Naive thymus-derived CD4-positive, alpha-beta T cell (primary cell): ENCODE measurements at regions of chr18 and their contacts with region 1.

Region 1: DNA sequence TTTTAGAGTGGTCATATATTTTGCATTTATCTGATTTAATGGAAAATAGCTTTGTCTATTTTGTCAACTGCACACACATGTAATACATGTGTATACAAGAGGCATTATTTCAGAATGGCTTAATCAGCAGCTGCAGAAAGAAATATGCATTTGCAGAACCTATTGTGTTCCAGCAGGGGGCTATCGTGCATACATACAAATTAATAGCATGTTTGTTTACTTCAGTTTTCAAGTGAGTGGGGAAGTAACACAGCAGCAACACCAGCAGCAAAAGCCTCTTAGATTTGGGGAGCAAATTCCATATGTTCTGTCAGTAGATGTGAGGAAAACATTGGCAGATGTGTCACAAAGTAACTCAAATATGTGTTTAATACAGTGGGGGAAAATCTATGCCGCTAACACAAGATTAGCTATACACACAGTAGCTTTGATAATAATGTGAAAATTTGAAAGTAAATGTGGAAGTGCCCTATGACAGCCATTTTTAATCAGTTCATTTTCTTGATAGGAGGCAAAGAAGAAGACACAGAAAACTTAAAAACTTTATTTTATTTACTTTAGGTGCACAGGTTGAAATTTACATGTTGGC is 218.1 kb downstream of the WDR7 start:
- DNase-seq: peak in 5 of 9 donors; percentile 10 to 27 (median 19)
- ATAC-seq: peak; percentile 75
- H3K4me3 ChIP-seq: no peak overlapping the region
- H3K4me3 Mint-ChIP-seq: no peak overlapping the region
- H3K27ac ChIP-seq: no peak overlapping the region
- H3K27ac Mint-ChIP-seq: no peak overlapping the region
- H3K4me1 ChIP-seq: peaks cover 0 to 14% of the 10 kb centered on the region in 2 donors
- H3K4me1 Mint-ChIP-seq: peaks cover 7 to 28% (median 19%) of the 10 kb centered on the region in 7 donors
- H3K27me3 ChIP-seq: no peaks in the 10 kb centered on the region
- H3K27me3 Mint-ChIP-seq: no peaks in the 10 kb centered on the region

Region 2: GRCh38 chr18:56711708-56712445 is 157.4 kb before region 1 on chr18:
- CTCF ChIA-PET with region 1: no interaction called
- POLR2A ChIA-PET with region 1: no interaction called
- intact Hi-C with region 1: no loop called
- DNase-seq: no peak
- ATAC-seq: no peak
- H3K4me3 ChIP-seq: no peak overlapping the region
- H3K4me3 Mint-ChIP-seq: no peak overlapping the region
- H3K27ac ChIP-seq: no peak overlapping the region
- H3K27ac Mint-ChIP-seq: no peak overlapping the region
- H3K4me1 ChIP-seq: no peaks in the 10 kb centered on the region
- H3K4me1 Mint-ChIP-seq: peaks cover 0 to 23% (median 7%) of the 10 kb centered on the region in 7 donors
- H3K27me3 ChIP-seq: no peaks in the 10 kb centered on the region
- H3K27me3 Mint-ChIP-seq: no peaks in the 10 kb centered on the region

Region 3: GRCh38 chr18:56770097-56770496 is 99.2 kb before region 1 on chr18:
- CTCF ChIA-PET with region 1: no interaction called
- POLR2A ChIA-PET with region 1: no interaction called
- intact Hi-C with region 1: no loop called
- DNase-seq: no peak
- ATAC-seq: no peak
- H3K4me3 ChIP-seq: no peak overlapping the region
- H3K4me3 Mint-ChIP-seq: no peak overlapping the region
- H3K27ac ChIP-seq: no peak overlapping the region
- H3K27ac Mint-ChIP-seq: no peak overlapping the region
- H3K4me1 ChIP-seq: no peaks in the 10 kb centered on the region
- H3K4me1 Mint-ChIP-seq: peaks cover 0 to 6% (median 0%) of the 10 kb centered on the region in 7 donors
- H3K27me3 ChIP-seq: no peaks in the 10 kb centered on the region
- H3K27me3 Mint-ChIP-seq: no peaks in the 10 kb centered on the region

Region 4: DNA sequence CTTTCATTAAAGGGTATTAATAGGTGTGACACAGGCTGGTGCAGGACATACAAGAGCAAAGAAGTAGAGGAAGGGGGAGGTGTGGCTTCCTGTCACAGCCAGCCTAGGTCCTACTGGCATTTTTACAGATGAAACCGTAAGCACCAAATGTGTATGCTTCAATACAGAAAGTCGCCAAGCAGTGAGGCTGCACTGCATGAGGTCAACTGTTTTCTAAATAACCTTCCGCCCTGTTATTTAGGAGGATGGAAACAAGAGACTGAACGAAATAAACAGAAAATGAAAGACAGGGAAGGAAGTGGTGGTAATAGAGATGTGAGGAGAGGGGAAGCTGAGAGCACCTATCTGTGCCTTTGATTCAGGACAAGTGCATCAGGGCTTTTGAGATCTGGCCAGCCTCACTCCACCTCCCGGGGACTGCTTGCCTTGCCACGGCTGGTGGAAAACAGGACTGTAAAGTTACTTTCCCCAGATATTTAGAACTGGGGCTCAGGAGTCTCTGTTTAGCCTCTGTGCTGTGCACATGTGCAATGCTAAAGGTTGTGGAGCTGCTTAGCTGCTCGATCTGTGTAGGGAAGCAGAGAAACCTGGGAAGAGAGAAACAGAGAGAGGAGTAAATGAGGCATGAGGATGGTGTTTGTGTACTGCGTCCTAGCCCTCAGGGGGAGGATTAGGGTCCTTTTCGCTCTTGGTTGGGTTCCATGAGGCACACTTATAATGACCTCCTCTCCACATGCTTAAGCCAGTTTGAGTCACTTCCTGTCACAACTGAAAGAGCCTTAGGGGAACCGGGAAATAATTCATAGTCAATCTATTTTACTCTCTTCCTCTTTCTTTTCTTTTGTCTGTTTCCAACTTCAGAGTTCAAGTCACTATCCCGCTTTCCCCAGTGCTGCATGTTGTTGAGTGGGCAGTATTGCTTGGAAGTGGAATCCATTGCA is 215.3 kb after region 1 on chr18:
- CTCF ChIA-PET with region 1: no interaction called
- POLR2A ChIA-PET with region 1: no interaction called
- intact Hi-C with region 1: loop called in 1 of 2 experiments (anchors 5 kb)
- DNase-seq: no peak
- ATAC-seq: peak; percentile 54
- H3K4me3 ChIP-seq: peak overlapping the region; percentile 39
- H3K4me3 Mint-ChIP-seq: peak overlapping the region in 5 of 10 donors; percentile 4 to 65 (median 15)
- H3K27ac ChIP-seq: no peak overlapping the region
- H3K27ac Mint-ChIP-seq: peak overlapping the region in 3 of 9 donors; percentile 5 to 69 (median 32)
- H3K4me1 ChIP-seq: peaks cover 0 to 7% of the 10 kb centered on the region in 2 donors
- H3K4me1 Mint-ChIP-seq: peaks cover 4 to 16% (median 11%) of the 10 kb centered on the region in 7 donors
- H3K27me3 ChIP-seq: no peaks in the 10 kb centered on the region
- H3K27me3 Mint-ChIP-seq: peaks cover 9 to 50% (median 34%) of the 10 kb centered on the region in 5 donors

Region 5: DNA sequence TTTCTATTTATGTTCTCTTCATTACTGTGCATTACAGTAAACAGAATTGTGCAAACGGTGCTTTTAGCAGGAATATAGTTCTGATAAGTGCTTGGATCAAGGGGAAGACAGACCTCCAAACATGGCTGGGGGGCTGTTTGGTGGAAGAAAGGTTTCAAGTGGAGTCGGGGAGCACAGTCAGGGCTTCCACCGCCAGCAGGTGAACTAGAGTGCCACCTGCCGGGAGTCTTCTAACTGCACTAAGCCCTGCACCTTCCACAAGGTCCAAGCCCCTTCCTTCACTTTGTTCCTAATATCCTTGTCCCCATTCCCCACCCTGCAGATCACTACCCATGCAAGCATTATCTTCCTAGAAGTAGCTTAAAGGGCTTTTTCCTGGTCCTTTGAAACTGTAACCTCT is 577.0 kb after region 1 on chr18:
- CTCF ChIA-PET with region 1: no interaction called
- POLR2A ChIA-PET with region 1: no interaction called
- intact Hi-C with region 1: loop called in 1 of 2 experiments (anchors 5 kb)
- DNase-seq: no peak
- ATAC-seq: no peak
- H3K4me3 ChIP-seq: no peak overlapping the region
- H3K4me3 Mint-ChIP-seq: no peak overlapping the region
- H3K27ac ChIP-seq: no peak overlapping the region
- H3K27ac Mint-ChIP-seq: no peak overlapping the region
- H3K4me1 ChIP-seq: no peaks in the 10 kb centered on the region
- H3K4me1 Mint-ChIP-seq: peaks cover 3 to 5% (median 4%) of the 10 kb centered on the region in 7 donors
- H3K27me3 ChIP-seq: peaks cover 0 to 12% of the 10 kb centered on the region in 2 donors
- H3K27me3 Mint-ChIP-seq: peaks cover 48 to 78% (median 71%) of the 10 kb centered on the region in 5 donors